ENCODE measurements at regions of chr15 and their contacts with region 1.

Region 1: GRCh38 chr15:51776952-51777574 is 25.7 kb downstream of the TMOD2 start:
- DNase-seq: peak; percentile 37 to 73 (median 40)
- H3K4me3 ChIP-seq: no peak overlapping the region
- H3K27ac ChIP-seq: no peak overlapping the region
- H3K4me1 ChIP-seq: no peaks in the 10 kb centered on the region
- H3K27me3 ChIP-seq: no peaks in the 10 kb centered on the region
- CTCF ChIP-seq: peak; percentile 55 to 64 (median 56)
- EP300 ChIP-seq: no peak
- POLR2A ChIP-seq: no peak

Region 2: GRCh38 chr15:51561271-51561670 is 215.8 kb before region 1 on chr15:
- intact Hi-C with region 1: no loop called
- DNase-seq: no peak
- H3K4me3 ChIP-seq: no peak overlapping the region
- H3K27ac ChIP-seq: no peak overlapping the region
- H3K4me1 ChIP-seq: no peaks in the 10 kb centered on the region
- H3K27me3 ChIP-seq: no peaks in the 10 kb centered on the region
- CTCF ChIP-seq: no peak
- EP300 ChIP-seq: no peak
- POLR2A ChIP-seq: no peak

Region 3: DNA sequence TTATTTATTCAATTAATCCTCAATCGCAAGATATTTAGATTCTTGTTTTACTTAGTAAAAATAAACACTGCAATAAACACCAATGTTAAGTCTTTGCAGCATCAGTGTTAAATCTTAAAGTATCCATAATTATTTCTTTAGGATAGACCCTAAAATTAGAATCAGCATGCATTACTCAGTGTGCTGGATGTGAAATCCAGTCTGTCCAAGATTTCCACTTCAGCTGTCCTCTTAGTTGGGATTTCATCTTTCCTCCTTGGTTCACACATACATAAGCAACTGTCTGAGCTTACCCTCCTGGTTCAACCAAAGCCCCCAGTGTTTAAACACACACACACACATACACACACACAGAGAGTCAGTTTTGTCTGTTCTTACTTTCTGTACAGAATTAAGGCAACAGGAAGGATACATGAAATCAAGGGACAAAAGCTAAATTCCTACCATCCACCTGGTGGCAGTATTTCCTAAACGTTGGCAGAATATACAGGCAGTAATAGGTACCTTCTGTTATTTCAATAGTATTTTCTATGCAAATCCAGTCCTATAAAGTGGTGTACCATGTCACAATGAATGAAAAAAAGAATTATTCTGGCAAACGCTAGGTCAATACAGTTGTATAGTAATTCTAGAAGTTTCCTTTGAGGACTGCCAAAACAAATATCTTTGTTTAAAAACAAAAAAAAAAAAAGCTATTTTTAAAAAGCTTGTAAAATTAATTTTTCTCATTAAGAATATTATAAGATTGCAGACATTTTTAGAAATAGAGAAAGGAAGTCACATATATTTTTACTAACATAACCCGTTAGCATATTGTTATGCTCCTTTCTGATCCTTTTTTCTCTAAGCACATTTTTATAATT is 127.2 kb before region 1 on chr15:
- intact Hi-C with region 1: loop called (anchors 2 to 5 kb)
- DNase-seq: peak in 2 of 5 donors; percentile 13 to 52
- H3K4me3 ChIP-seq: no peak overlapping the region
- H3K27ac ChIP-seq: no peak overlapping the region
- H3K4me1 ChIP-seq: no peaks in the 10 kb centered on the region
- H3K27me3 ChIP-seq: no peaks in the 10 kb centered on the region
- CTCF ChIP-seq: peak; percentile 52 to 86 (median 73)
- EP300 ChIP-seq: no peak
- POLR2A ChIP-seq: no peak

Region 4: GRCh38 chr15:51661072-51661471 is 116.0 kb before region 1 on chr15:
- intact Hi-C with region 1: loop called in 1 of 4 experiments (anchors 5 kb)
- DNase-seq: no peak
- H3K4me3 ChIP-seq: no peak overlapping the region
- H3K27ac ChIP-seq: no peak overlapping the region
- H3K4me1 ChIP-seq: no peaks in the 10 kb centered on the region
- H3K27me3 ChIP-seq: no peaks in the 10 kb centered on the region
- CTCF ChIP-seq: no peak
- EP300 ChIP-seq: no peak
- POLR2A ChIP-seq: no peak

Region 5: DNA sequence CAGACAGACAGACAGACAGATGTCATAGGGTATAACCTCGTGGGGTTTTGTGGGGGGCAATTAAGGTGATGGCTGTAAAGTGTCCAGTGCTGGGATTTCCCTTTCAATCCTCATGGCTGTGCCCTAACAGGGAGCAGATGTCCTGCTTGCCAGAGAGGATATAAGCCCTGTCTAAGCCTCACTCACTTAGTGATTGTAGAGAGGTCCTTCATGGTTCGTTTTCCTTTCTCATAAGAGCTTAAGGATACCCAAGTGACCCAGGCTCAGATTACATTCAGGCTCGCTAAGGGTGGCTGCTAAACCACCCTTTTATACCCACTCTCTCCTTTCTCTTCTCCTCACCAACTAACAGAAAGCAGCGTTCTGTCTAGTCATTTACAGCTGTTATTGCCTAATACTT is 58.8 kb before region 1 on chr15:
- intact Hi-C with region 1: loop called in 1 of 4 experiments (anchors 10 kb)
- DNase-seq: no peak
- H3K4me3 ChIP-seq: no peak overlapping the region
- H3K27ac ChIP-seq: no peak overlapping the region
- H3K4me1 ChIP-seq: no peaks in the 10 kb centered on the region
- H3K27me3 ChIP-seq: no peaks in the 10 kb centered on the region
- CTCF ChIP-seq: no peak
- EP300 ChIP-seq: no peak
- POLR2A ChIP-seq: no peak